ENCODE measurements at regions of chr19 and their contacts with region 1.

Region 1: GRCh38 chr19:48588670-48589399 is 17.7 kb upstream of the SPACA4 start:
- DNase-seq: peak; percentile 94
- ATAC-seq: peak; percentile 89
- H3K4me3 Mint-ChIP-seq: peak overlapping the region; percentile 35
- H3K27ac Mint-ChIP-seq: peak overlapping the region; percentile 43
- H3K4me1 Mint-ChIP-seq: peaks cover 15% of the 10 kb centered on the region
- H3K27me3 Mint-ChIP-seq: no peaks in the 10 kb centered on the region

Region 2: GRCh38 chr19:48255376-48256303 is 333.2 kb before region 1 on chr19 and contains the start of gene CARD8:
- CTCF ChIA-PET with region 1: no interaction called
- POLR2A ChIA-PET with region 1: no interaction called
- intact Hi-C with region 1: no loop called
- DNase-seq: peak; percentile 89
- ATAC-seq: peak; percentile 89
- H3K4me3 Mint-ChIP-seq: peak within 1 kb of the TSS; percentile 92
- H3K27ac Mint-ChIP-seq: peak within 1 kb of the TSS; percentile 98
- H3K4me1 Mint-ChIP-seq: peaks cover 63% of the 10 kb centered on the region
- H3K27me3 Mint-ChIP-seq: no peaks in the 10 kb centered on the region
- total RNA-seq, gene CARD8: 109 to 118 TPM

Region 3: DNA sequence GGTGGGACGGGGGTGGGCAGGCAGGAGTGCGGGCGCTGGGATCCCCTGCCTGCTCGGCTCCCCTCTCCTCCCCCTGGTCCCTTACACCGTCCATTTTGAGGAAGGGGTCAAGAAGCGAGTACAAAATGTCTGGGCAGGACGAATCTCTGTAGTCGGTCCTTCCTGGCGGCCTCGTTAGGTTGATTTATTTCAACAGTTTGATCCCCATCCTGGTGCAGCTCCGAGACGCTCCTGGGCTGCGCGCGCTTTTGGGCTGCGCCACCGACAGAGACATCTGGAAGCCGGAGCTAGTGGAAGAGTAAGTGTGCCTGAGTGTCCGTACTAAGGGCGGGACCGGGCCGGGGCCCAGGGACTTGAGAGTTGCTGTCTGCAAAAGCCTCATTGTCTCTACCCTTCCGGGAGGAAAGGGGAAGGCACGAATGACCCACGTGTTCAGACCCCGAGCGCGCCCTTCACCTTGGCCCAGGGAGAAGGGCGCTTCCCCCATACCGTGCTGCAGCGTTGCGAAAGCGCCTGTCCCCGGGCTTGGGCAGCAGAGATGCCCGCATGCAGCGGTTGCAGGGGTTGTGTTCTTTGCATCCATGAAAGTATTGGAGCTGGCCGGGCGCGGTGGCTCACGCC is 317.2 kb before region 1 on chr19:
- CTCF ChIA-PET with region 1: no interaction called
- POLR2A ChIA-PET with region 1: no interaction called
- intact Hi-C with region 1: loop called in 1 of 2 experiments (anchors 1 kb)
- DNase-seq: peak; percentile 24
- ATAC-seq: peak; percentile 34
- H3K4me3 Mint-ChIP-seq: peak overlapping the region; percentile 75
- H3K27ac Mint-ChIP-seq: no peak overlapping the region
- H3K4me1 Mint-ChIP-seq: peaks cover 12% of the 10 kb centered on the region
- H3K27me3 Mint-ChIP-seq: peaks cover 20% of the 10 kb centered on the region

Region 4: DNA sequence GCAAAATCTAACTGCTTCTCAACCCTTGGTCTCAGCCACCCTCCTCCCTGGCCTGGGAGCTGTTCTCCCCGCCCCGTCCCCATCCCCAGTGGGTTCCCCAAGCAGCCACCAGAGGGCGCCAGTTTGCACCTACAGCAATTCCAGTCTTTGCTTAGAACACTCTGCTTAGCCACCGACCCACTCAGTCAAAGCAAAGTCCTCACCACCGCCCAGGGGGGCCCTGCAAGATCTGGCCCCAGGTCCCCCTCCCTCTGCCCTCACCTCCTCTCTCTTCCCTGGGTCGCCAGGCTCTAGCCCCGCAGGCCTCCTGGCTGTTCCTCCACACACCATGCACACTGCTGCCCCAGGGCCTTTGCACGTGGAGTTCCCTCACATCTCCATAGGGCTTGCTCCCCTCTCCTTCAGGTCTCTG is 237.5 kb before region 1 on chr19:
- CTCF ChIA-PET with region 1: no interaction called
- POLR2A ChIA-PET with region 1: no interaction called
- intact Hi-C with region 1: loop called in 1 of 2 experiments (anchors 1 kb)
- DNase-seq: peak; percentile 92
- ATAC-seq: peak; percentile 99
- H3K4me3 Mint-ChIP-seq: no peak overlapping the region
- H3K27ac Mint-ChIP-seq: no peak overlapping the region
- H3K4me1 Mint-ChIP-seq: no peaks in the 10 kb centered on the region
- H3K27me3 Mint-ChIP-seq: no peaks in the 10 kb centered on the region

Region 5: GRCh38 chr19:48501496-48502350 is 87.1 kb before region 1 on chr19:
- CTCF ChIA-PET with region 1: interaction called, 60 read pairs
- POLR2A ChIA-PET with region 1: interaction called, 13 read pairs
- intact Hi-C with region 1: loop called (anchors 1 kb)
- DNase-seq: peak; percentile 86
- ATAC-seq: peak; percentile 76
- H3K4me3 Mint-ChIP-seq: peak overlapping the region; percentile 45
- H3K27ac Mint-ChIP-seq: peak overlapping the region; percentile 44
- H3K4me1 Mint-ChIP-seq: peaks cover 18% of the 10 kb centered on the region
- H3K27me3 Mint-ChIP-seq: peaks cover 16% of the 10 kb centered on the region

Region 6: DNA sequence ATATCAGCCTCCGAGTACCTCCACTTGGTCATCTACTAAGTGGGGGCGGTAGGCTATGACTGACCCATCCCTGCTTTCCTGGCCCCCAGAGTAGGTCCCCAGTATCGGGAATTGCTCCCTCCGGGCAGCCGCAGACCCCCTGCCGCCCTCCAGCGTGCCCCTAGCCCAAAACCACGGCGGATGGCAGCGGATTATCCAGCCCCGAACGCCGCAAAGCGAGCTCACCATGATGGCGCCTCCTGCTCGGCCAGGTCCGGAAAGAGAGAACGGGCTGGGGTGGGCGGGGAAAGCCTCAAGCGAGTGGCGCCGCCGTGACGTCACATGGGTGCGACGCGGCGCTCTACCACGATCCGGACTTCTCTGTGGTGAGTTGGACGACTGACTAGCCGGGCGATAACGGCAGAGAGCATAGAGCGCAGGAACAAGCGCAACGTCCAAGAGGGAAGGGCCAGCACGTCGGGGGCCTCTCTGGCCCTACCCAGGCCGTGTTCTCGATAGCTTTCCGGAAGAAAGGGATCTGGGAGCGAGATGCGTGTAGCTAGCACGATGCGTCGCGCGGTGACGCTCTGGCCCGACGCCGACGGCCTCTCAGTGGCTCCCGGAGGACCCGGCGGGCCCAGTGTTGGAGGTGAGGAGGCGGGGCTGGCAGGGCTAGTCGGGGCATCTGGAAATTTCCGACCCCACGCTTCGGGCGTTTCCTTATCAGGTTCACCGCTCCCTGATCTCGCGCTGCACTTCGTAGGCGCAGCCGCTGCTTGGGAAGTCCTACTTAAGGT is 30.3 kb after region 1 on chr19 and contains the starts of genes RPL18 and SPHK2:
- CTCF ChIA-PET with region 1: interaction called, 4 read pairs
- POLR2A ChIA-PET with region 1: interaction called, 5 read pairs
- intact Hi-C with region 1: loop called in 1 of 2 experiments (anchors 1 kb)
- DNase-seq: peak; percentile 97
- ATAC-seq: peak; percentile 82
- H3K4me3 Mint-ChIP-seq: peak within 1 kb of the TSS; percentile 94
- H3K27ac Mint-ChIP-seq: peak within 1 kb of the TSS; percentile 97
- H3K4me1 Mint-ChIP-seq: peaks cover 48% of the 10 kb centered on the region
- H3K27me3 Mint-ChIP-seq: no peaks in the 10 kb centered on the region
- total RNA-seq, gene RPL18: 2,026 to 2,191 TPM
- total RNA-seq, gene SPHK2: 27.0 TPM

Region 7: DNA sequence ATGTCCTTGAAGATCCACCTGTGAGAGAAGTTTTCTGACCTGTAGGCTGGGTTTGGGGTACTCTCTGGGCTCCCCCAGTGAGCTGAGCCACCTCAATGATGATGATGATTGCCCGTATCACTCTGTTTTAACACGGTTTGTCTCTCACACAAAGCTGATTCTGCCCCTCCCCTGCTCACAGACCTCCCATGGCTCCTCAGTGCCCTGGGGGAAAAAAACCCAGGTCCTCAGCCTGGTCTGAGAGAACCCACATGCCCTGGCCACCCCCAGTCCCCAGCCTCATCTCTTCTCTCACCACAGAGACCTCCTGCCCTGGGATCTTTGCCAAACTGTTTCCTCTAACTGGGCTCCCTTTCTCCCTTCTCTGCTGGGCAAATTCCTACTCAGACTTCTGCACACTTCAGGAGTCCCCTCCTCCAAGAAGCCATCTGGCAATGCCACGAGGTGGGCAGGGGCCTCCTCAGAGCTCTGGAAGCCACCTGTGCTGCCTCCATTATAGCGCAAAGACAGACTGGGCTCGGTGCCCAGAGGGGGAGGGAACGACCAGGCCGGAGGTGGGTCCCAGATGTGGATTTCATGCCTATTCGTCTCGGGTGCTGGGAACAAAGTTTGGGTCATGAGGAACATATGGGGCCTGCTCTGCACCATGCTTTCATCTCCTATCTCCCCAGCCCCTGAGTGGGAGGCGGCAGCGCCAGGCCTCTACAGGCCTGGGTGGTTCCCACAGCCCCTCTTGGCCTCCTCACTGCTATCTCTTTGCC is 65.6 kb after region 1 on chr19:
- CTCF ChIA-PET with region 1: no interaction called
- POLR2A ChIA-PET with region 1: no interaction called
- intact Hi-C with region 1: no loop called
- DNase-seq: no peak
- ATAC-seq: no peak
- H3K4me3 Mint-ChIP-seq: no peak overlapping the region
- H3K27ac Mint-ChIP-seq: no peak overlapping the region
- H3K4me1 Mint-ChIP-seq: peaks cover 16% of the 10 kb centered on the region
- H3K27me3 Mint-ChIP-seq: no peaks in the 10 kb centered on the region